ENCODE measurements at regions of chr1 and their contacts with region 1.

Region 1: GRCh38 chr1:87328272-87329050 is at the start of gene LMO4:
- DNase-seq: peak; percentile 84 to 96 (median 90)
- ATAC-seq: peak; percentile 82
- H3K4me3 ChIP-seq: peak within 1 kb of the TSS; percentile 80
- H3K27ac ChIP-seq: peak within 1 kb of the TSS; percentile 84
- H3K4me1 ChIP-seq: peaks cover 9 to 13% of the 10 kb centered on the region in 2 experiments; a peak in 4 of 5 replicates
- H3K27me3 ChIP-seq: no peaks in the 10 kb centered on the region
- CTCF ChIP-seq: no peak
- EP300 ChIP-seq: no peak
- POLR2A ChIP-seq: peak; percentile 85
- RAD21 ChIP-seq: no peak
- polyA plus RNA-seq, gene LMO4: 3.1 to 3.5 TPM

Region 2: GRCh38 chr1:87305762-87306161 is 22.7 kb before region 1 on chr1:
- CTCF ChIA-PET with region 1: no interaction called
- POLR2A ChIA-PET with region 1: interaction called, 11 read pairs
- in situ Hi-C with region 1: no loop called
- intact Hi-C with region 1: no loop called
- DNase-seq: no peak
- ATAC-seq: no peak
- H3K4me3 ChIP-seq: no peak overlapping the region
- H3K27ac ChIP-seq: no peak overlapping the region
- H3K4me1 ChIP-seq: no peaks in the 10 kb centered on the region
- H3K27me3 ChIP-seq: peaks cover 19 to 26% of the 10 kb centered on the region in 2 experiments; a peak in 4 of 5 replicates
- CTCF ChIP-seq: no peak
- EP300 ChIP-seq: no peak
- POLR2A ChIP-seq: no peak
- RAD21 ChIP-seq: no peak

Region 3: DNA sequence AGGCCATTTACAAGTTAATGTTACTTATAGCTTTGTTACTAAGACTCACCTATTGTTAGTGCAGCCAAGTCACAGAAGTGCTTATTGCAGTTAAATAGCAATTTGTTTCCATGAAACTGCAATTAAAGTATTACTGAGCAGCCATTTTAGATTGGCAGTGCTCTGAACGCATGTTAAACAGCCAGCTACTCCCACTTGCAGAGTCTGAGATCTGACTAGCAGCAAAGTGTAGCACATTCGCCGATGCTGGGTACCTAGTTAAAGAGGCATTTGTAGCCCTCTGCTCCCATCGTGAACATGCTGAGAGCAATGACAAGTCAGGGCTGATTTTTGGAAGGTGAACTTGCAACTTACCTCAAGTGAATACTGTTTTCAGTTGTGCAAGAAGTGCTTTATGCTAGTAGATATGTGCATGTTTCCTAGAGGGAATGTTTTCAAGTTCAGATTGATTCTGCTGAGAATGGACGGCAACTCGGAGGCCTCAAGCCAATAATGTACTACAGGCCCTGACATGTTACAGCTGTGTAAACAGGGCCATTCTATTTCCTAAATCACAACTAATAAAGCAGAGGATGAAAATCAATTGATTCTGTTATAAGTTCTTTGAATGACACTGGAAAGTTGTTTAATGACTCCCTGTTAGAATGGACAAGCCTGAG is 20.0 kb after region 1 on chr1:
- CTCF ChIA-PET with region 1: no interaction called
- POLR2A ChIA-PET with region 1: interaction called, 13 read pairs
- in situ Hi-C with region 1: no loop called
- intact Hi-C with region 1: no loop called
- DNase-seq: no peak
- ATAC-seq: peak; percentile 40
- H3K4me3 ChIP-seq: no peak overlapping the region
- H3K27ac ChIP-seq: no peak overlapping the region
- H3K4me1 ChIP-seq: no peaks in the 10 kb centered on the region
- H3K27me3 ChIP-seq: no peaks in the 10 kb centered on the region
- CTCF ChIP-seq: no peak
- EP300 ChIP-seq: no peak
- POLR2A ChIP-seq: no peak
- RAD21 ChIP-seq: no peak

Region 4: DNA sequence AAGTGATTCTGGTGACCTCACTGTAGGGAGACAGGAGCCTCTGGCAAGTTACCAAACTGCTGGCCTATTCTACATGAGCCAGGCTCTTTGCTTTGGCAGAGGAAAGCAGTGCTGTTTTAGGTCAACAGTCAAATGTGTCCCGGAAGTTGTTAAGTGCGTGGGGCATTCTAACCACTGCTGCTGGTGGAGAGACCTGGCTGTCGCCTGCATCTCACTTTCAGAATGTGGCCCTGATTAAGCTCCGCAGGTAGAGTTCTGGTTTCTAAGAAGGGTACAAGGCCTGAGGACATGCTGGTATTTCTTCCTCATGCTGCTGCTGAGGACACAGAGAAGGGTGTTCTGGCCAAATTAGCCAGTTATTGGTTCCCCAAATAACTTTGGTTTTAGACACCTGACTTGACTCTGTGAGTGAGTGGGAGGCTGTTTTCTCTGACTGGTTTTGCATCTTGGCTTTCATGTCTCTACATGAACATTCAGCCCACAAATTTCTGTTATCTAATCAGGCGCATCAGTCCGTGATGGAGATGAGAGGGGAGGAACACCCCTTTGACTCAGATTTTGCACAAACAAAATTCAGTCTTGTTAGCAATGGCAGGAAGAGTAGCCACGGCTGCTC is 121.0 kb after region 1 on chr1:
- CTCF ChIA-PET with region 1: no interaction called
- POLR2A ChIA-PET with region 1: no interaction called
- in situ Hi-C with region 1: no loop called
- intact Hi-C with region 1: loop called (anchors 2 kb)
- DNase-seq: no peak
- ATAC-seq: peak; percentile 36; the same call in 2 of the 3 replicates
- H3K4me3 ChIP-seq: no peak overlapping the region
- H3K27ac ChIP-seq: no peak overlapping the region
- H3K4me1 ChIP-seq: no peaks in the 10 kb centered on the region; a peak in 1 of 5 replicates
- H3K27me3 ChIP-seq: peaks cover 0 to 4% of the 10 kb centered on the region in 2 experiments; a peak in 1 of 5 replicates
- CTCF ChIP-seq: no peak
- EP300 ChIP-seq: no peak
- POLR2A ChIP-seq: no peak
- RAD21 ChIP-seq: no peak

Region 5: DNA sequence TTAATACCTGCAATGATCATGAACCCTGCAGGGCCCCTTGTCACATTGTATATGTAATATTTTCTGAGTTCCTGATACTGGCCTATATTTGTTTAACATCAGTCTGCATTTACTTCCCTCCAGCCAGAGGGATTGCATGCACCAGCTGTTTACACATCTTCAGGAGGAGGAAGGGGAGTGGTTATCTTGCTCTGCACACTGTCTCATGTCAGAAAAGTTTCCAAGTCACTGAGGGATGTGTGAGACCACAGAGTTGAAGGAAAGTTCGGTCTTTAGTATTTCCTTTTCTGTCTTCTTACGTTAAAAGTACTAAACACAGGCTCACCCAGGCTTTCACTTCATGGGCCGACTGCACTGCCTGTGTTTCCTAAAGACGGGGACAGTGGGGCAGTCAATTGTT is 574.4 kb after region 1 on chr1:
- CTCF ChIA-PET with region 1: no interaction called
- POLR2A ChIA-PET with region 1: no interaction called
- in situ Hi-C with region 1: no loop called
- intact Hi-C with region 1: no loop called
- DNase-seq: peak in 1 of 4 experiments; percentile 20
- ATAC-seq: no peak; the same call in 2 of the 3 replicates
- H3K4me3 ChIP-seq: no peak overlapping the region
- H3K27ac ChIP-seq: no peak overlapping the region
- H3K4me1 ChIP-seq: no peaks in the 10 kb centered on the region
- H3K27me3 ChIP-seq: no peaks in the 10 kb centered on the region
- CTCF ChIP-seq: no peak
- EP300 ChIP-seq: no peak
- POLR2A ChIP-seq: no peak
- RAD21 ChIP-seq: no peak